IMR-90 (cell line): ENCODE measurements at regions of chr9 and their contacts with region 1.

Region 1: GRCh38 chr9:132333556-132333955 is 21.2 kb downstream of the SETX start:
- DNase-seq: no peak
- ATAC-seq: no peak
- H3K4me3 ChIP-seq: no peak overlapping the region
- H3K27ac ChIP-seq: no peak overlapping the region
- H3K4me1 ChIP-seq: no peaks in the 10 kb centered on the region
- H3K27me3 ChIP-seq: no peaks in the 10 kb centered on the region
- CTCF ChIP-seq: no peak
- POLR2A ChIP-seq: no peak
- RAD21 ChIP-seq: no peak

Region 2: DNA sequence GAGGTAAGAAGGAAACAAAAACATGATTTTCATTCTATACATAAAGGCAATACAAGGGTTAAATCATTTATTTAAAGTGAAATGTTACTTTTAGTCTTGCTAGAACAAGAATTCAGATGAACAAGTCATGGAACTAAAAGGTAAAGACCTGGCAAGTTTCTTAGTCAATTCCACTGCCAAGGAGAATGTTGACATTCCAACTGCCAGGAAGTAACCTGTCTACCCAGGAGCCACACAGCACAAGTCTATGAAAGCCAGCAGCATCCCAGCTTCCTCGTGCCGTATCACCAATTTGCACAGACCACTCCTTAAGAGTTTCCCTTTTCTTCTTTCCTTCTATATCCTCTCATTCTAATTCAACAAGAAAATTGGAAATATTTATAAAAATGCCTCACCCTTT is 58.7 kb before region 1 on chr9:
- CTCF ChIA-PET with region 1: no interaction called
- POLR2A ChIA-PET with region 1: no interaction called
- dilution Hi-C with region 1: no loop called
- in situ Hi-C with region 1: no loop called
- intact Hi-C with region 1: loop called (anchors 5 kb)
- DNase-seq: no peak
- ATAC-seq: no peak
- H3K4me3 ChIP-seq: no peak overlapping the region
- H3K27ac ChIP-seq: no peak overlapping the region
- H3K4me1 ChIP-seq: no peaks in the 10 kb centered on the region
- H3K27me3 ChIP-seq: no peaks in the 10 kb centered on the region
- CTCF ChIP-seq: no peak
- POLR2A ChIP-seq: no peak
- RAD21 ChIP-seq: no peak

Region 3: DNA sequence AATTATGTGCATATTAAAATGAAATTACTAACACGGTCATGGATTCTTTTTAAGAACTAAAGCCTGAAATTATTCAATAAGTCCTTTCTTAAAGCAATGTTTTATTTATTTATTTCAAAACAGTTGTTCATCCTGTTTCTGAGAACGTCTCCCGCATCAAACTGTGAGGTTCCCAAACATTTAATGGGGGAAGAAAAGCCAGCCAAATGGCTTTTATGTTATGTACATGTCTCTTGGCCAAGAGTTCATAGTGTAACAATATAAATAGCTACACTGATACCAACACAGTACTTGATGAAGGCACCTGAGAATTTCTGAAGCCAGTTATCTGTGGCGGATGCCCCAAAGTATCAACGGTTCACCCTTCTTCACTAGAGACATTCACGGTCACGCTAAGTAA is 57.4 kb after region 1 on chr9:
- CTCF ChIA-PET with region 1: no interaction called
- POLR2A ChIA-PET with region 1: no interaction called
- dilution Hi-C with region 1: no loop called
- in situ Hi-C with region 1: no loop called
- intact Hi-C with region 1: loop called (anchors 10 kb)
- DNase-seq: no peak
- ATAC-seq: no peak
- H3K4me3 ChIP-seq: no peak overlapping the region
- H3K27ac ChIP-seq: no peak overlapping the region
- H3K4me1 ChIP-seq: no peaks in the 10 kb centered on the region
- H3K27me3 ChIP-seq: no peaks in the 10 kb centered on the region
- CTCF ChIP-seq: no peak
- POLR2A ChIP-seq: no peak
- RAD21 ChIP-seq: no peak